ENCODE measurements at regions of chr4 and their contacts with region 1.

Region 1: GRCh38 chr4:87235020-87235671 is 14.7 kb upstream of the KLHL8 start:
- DNase-seq: no peak

Region 2: DNA sequence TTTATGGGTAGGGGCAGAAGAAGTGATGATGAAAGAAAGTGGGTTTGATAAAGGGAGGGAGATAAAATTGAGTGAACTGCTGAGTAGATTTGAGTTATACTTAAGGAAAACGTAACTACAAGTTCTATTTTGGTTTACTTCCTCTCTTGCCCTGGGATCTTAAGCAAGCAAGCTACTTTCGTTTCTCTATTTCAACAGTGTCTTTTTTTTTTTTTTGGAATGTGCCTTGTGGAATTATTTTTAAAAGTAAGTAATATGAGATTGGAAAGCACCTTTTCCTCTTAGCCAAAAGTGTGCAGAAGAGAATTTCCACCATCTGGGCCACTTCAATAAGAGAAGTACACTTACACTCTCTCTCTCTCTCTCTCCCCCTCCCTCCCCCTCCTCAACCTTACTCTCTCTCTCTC is 326.9 kb before region 1 on chr4:
- in situ Hi-C with region 1: loop called (anchors 25 kb)
- DNase-seq: peak; percentile 75

Measured in KBM-7 (cell line).